ENCODE measurements at regions of chr3 and their contacts with region 1.

Region 1: GRCh38 chr3:52831500-52832301 is 1.2 kb upstream of the ITIH4 start:
- DNase-seq: peak in 4 of 5 donors; percentile 51 to 68 (median 68)
- ATAC-seq: peak in 2 of 4 donors; percentile 10 to 34
- H3K4me3 ChIP-seq: no peak overlapping the region
- H3K27ac ChIP-seq: peak overlapping the region in 8 of 12 donors; percentile 4 to 53 (median 46)
- H3K4me1 ChIP-seq: peaks cover 5 to 41% (median 23%) of the 10 kb centered on the region in 12 donors
- H3K27me3 ChIP-seq: no peaks in the 10 kb centered on the region
- CTCF ChIP-seq: no peak
- POLR2A ChIP-seq: no peak

Region 2: GRCh38 chr3:52770496-52771333 is 61.0 kb before region 1 on chr3 and contains the start of gene NEK4:
- intact Hi-C with region 1: loop called in 2 of 10 experiments (anchors 5 kb)
- DNase-seq: peak; percentile 93 to 98 (median 96)
- ATAC-seq: peak; percentile 99 to 100 (median 100)
- H3K4me3 ChIP-seq: peak within 1 kb of the TSS; percentile 69 to 96 (median 88)
- H3K27ac ChIP-seq: peak within 1 kb of the TSS; percentile 35 to 92 (median 80)
- H3K4me1 ChIP-seq: peaks cover 0 to 29% (median 12%) of the 10 kb centered on the region in 12 donors
- H3K27me3 ChIP-seq: no peaks in the 10 kb centered on the region
- CTCF ChIP-seq: peak in 1 of 12 donors; percentile 14
- POLR2A ChIP-seq: peak in 1 of 2 donors; percentile 78
- total RNA-seq, gene NEK4: 13.1 to 21.5 (median 15.2) TPM